ENCODE measurements at regions of chr15 and their contacts with region 1.

Region 1: DNA sequence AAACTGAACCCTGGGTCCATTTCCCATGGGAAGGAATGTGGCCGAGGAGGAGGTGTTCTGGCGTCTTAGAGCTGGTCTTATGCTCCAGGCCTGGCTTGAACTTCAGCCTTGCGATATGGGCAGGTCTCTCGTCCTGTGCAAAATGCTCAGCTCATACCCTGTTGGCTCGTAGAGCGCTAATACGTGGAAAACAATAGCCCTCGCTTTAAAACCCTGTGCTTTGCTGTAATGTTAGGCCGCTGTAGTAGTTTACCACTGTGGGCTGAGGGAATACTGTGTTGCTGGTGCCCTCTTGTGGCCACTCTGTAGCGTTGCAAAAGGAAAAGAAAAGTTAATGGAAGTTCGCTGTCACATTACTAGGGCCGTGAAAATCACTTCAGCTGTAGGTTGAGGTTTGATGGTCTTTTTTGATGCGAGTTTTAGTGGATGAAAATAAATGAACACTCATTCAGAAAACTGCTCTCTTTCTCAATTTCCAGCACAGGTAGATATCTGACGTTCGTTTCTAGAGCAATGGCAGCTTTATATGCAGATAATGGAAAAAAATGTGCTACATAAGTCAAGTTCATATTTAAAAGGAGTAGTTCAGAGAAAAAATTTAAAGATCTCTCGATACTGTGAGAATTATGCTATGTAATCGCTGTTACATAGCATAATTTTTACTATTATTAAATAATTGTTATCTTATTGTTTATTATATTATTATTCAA is 92.9 kb downstream of the MCTP2 start:
- DNase-seq: peak; percentile 79
- ATAC-seq: peak; percentile 83
- H3K4me3 Mint-ChIP-seq: no peak overlapping the region
- H3K27ac Mint-ChIP-seq: peak overlapping the region; percentile 71
- H3K4me1 Mint-ChIP-seq: peaks cover 44% of the 10 kb centered on the region
- H3K27me3 Mint-ChIP-seq: no peaks in the 10 kb centered on the region

Region 2: DNA sequence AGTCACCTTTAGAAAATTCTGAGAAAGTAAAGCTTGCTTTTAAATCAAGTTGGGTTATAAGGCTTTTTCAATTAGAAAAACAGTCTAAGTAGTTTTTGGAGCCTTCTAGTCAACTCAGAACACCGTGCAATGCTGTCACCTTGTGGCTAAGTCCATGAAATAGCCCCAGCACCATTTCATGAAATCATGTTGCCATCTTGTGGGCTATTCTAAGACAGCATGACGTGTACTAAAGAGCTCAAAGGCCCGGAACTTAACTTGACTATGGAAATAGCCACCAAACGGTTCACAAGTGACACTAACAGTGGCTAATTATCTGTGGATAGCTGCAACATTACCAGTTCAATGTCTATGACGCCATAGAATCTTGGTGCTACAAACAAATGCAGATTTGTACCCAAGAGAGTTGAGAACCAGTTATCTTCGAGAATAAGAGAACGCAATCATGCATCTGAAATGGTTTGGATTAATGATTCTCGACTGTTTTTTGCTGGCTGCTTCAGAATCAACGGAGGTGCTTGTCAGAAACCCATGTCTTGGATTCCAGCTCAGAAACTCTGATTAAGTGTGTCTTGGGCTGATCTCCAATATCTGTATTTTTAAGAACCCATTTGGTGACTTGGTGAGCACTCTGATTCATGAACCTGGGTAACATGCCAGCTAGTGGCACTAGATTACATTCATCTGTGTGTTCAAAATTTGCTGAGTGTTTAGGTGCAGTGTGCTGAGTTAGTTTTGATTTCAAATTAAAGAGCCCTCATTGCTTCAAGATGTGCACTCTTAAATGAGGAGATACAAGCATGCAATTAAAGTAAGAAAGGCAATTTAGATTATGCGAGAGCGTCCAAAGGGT is 204.1 kb before region 1 on chr15:
- CTCF ChIA-PET with region 1: interaction called, 10 read pairs
- DNase-seq: peak; percentile 77
- ATAC-seq: peak; percentile 100
- H3K4me3 Mint-ChIP-seq: no peak overlapping the region
- H3K27ac Mint-ChIP-seq: no peak overlapping the region
- H3K4me1 Mint-ChIP-seq: peaks cover under 1% of the 10 kb centered on the region
- H3K27me3 Mint-ChIP-seq: peaks cover under 1% of the 10 kb centered on the region

Region 3: GRCh38 chr15:94174399-94174802 is 149.9 kb before region 1 on chr15:
- CTCF ChIA-PET with region 1: interaction called, 24 read pairs
- DNase-seq: peak; percentile 57
- ATAC-seq: peak; percentile 90
- H3K4me3 Mint-ChIP-seq: no peak overlapping the region
- H3K27ac Mint-ChIP-seq: peak overlapping the region; percentile 49
- H3K4me1 Mint-ChIP-seq: peaks cover 42% of the 10 kb centered on the region
- H3K27me3 Mint-ChIP-seq: peaks cover 4% of the 10 kb centered on the region

Region 4: DNA sequence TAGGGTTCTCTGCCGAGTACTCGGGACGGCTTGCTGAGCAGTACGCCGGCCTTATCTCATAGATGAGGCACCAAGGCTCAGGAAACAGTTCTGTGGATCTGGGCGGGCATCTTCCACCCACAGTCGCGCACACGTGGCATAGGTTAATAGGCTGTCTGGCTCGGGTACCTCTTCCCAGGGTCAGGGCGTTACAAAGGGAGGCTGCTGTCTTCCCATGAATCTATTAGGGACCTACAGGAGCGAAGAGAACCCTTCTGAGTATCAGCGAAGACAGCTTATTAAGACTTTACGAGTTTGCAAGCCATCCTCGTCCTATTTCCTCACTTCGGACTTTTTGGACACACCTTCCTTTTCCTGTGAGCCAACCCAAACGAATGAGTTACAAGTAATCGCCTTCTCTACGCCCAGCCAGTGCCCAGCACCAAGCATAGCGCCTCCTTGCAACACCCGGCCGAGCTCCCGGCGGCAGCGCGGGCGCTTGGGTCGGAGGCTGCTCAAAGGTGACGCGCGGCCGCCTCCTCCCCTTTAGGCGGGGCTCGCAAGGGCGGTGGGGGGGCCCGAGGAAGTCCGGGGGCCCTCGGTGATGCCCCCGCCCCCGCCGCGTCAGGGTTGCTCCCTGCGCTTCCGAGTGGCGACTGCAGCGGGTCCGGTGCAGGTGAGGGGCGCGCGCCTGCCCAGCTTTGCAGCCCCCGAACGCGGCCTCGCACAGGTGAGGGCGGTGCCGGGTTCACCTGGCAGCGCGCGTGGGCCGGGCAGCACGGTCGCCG is 93.1 kb before region 1 on chr15 and contains the start of gene MCTP2:
- CTCF ChIA-PET with region 1: interaction called, 95 read pairs
- DNase-seq: peak; percentile 95
- ATAC-seq: peak; percentile 90
- H3K4me3 Mint-ChIP-seq: peak within 1 kb of the TSS; percentile 84
- H3K27ac Mint-ChIP-seq: peak within 1 kb of the TSS; percentile 92
- H3K4me1 Mint-ChIP-seq: peaks cover 69% of the 10 kb centered on the region
- H3K27me3 Mint-ChIP-seq: no peaks in the 10 kb centered on the region
- total RNA-seq, gene MCTP2: 67.2 to 83.8 TPM

Region 5: DNA sequence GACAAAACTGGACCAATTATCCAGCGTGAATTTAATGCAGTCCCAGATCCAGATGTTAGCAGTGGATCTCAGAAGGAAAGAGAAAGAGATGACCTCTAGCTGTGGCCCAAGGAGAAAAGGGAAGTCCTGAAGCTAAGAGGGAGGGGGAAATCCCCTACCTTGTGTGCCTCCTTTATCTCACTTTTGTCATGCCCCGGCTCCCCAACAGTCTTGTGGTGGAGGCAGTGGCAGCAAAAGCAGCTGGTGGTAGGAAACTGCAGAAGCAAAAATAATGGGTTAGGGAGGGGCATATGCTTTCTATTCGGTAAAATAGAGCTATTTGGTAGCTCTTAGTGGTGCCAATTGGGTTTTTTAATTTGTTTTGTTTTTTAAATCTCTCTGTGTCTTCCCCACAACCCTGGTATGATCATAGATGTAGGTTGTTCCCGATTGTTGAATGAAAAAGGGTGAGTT is 36.5 kb before region 1 on chr15:
- CTCF ChIA-PET with region 1: interaction called, 27 read pairs
- DNase-seq: peak; percentile 87
- ATAC-seq: peak; percentile 94
- H3K4me3 Mint-ChIP-seq: peak overlapping the region; percentile 76
- H3K27ac Mint-ChIP-seq: peak overlapping the region; percentile 92
- H3K4me1 Mint-ChIP-seq: peaks cover 61% of the 10 kb centered on the region
- H3K27me3 Mint-ChIP-seq: no peaks in the 10 kb centered on the region

Region 6: DNA sequence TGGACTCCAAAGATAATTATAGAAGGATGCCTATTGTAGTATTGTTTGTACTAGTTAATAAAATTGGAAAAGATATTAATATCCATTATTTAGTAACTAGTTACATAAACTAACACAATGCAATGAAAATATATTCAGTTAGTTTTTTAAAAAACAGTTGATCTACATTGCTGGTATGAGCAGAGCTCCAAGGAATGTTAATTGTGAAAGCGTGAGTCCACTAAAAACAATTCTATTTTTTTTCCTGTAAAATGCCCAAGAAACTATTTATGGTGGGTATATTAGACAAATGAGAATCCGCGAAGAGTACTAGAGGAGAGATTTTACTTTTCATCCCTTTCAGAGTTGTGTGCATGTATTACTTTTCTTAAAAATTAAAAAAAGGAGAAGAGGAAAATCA is 11.3 kb after region 1 on chr15:
- CTCF ChIA-PET with region 1: interaction called, 24 read pairs
- DNase-seq: no peak
- ATAC-seq: no peak
- H3K4me3 Mint-ChIP-seq: no peak overlapping the region
- H3K27ac Mint-ChIP-seq: no peak overlapping the region
- H3K4me1 Mint-ChIP-seq: no peaks in the 10 kb centered on the region
- H3K27me3 Mint-ChIP-seq: no peaks in the 10 kb centered on the region